Activated CD4-positive, alpha-beta T cell treated with anti-CD3 and anti-CD28 coated beads, Interleukin-2, amount 10 ng/mL, durations not matched to agents 24 days and 14 days (primary cell): ENCODE measurements at regions of chr10 and their contacts with region 1.

Region 1: GRCh38 chr10:50540069-50540825 is 83.5 kb downstream of the SGMS1 start:
- DNase-seq: peak; percentile 71
- H3K4me3 Mint-ChIP-seq: peak overlapping the region; percentile 63
- H3K27ac Mint-ChIP-seq: peak overlapping the region; percentile 87
- H3K4me1 Mint-ChIP-seq: peaks cover 72% of the 10 kb centered on the region
- H3K27me3 Mint-ChIP-seq: no peaks in the 10 kb centered on the region

Region 2: GRCh38 chr10:49187950-49188761 is 1352.1 kb before region 1 on chr10 and contains the start of gene TMEM273:
- intact Hi-C with region 1: loop called (anchors 10 kb)
- DNase-seq: peak; percentile 77
- H3K4me3 Mint-ChIP-seq: peak within 1 kb of the TSS; percentile 83
- H3K27ac Mint-ChIP-seq: peak within 1 kb of the TSS; percentile 77
- H3K4me1 Mint-ChIP-seq: peaks cover 50% of the 10 kb centered on the region
- H3K27me3 Mint-ChIP-seq: peaks cover 6% of the 10 kb centered on the region
- total RNA-seq, gene TMEM273: 34.3 and 36.4 TPM in 2 replicates

Region 3: DNA sequence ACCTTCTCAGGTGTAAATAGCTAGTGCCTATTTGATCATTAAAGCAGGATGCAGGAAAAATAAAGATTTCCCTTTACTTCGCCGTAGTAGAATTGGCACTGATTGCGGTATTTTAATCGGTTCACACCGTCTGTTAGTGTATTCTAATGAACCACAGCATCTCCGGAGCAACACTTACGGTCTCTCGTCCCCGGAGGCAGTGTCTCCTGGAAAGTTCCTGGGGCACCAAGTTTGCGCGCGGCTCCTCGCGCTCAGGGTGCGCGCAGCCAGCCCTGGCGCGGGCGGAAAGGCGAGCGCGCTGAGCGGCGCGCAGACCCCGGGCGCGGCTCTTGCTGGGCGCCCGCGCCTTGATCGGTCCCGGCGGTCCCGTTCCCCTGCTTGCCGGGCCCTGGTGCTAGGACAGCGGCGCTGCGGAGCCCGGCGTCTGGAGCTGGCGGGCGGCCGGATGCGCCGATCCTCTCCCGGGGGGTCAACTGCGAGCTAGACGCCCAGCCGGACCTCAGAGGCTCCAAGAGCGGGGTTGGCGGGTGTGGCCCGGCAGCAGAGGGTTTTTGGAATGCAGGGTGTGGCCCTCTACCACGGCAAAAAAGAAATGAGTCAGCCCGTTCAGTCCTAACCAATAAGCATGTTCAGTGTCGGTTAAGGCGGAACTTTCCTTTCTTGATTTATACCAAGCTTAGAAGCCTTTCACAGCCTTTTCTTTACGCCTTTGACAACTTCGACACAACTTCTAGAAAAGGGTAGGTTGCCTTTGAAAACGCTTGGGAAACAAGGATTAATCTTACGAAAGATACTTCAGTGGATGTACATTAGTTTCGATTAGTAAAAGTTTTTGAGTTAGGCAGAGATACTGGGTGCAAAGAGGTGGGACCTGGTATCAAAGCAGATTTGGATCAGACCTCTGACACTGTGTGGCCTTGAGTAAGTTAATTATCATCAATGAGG is 122.1 kb before region 1 on chr10:
- intact Hi-C with region 1: loop called (anchors 1 kb)
- DNase-seq: peak; percentile 88
- H3K4me3 Mint-ChIP-seq: peak overlapping the region; percentile 86
- H3K27ac Mint-ChIP-seq: peak overlapping the region; percentile 82
- H3K4me1 Mint-ChIP-seq: peaks cover 45% of the 10 kb centered on the region
- H3K27me3 Mint-ChIP-seq: no peaks in the 10 kb centered on the region

Region 4: GRCh38 chr10:50501918-50502452 is 38.3 kb before region 1 on chr10:
- intact Hi-C with region 1: loop called (anchors 1 kb)
- DNase-seq: no peak
- H3K4me3 Mint-ChIP-seq: peak overlapping the region; percentile 35
- H3K27ac Mint-ChIP-seq: peak overlapping the region; percentile 80
- H3K4me1 Mint-ChIP-seq: peaks cover 51% of the 10 kb centered on the region
- H3K27me3 Mint-ChIP-seq: no peaks in the 10 kb centered on the region

Region 5: DNA sequence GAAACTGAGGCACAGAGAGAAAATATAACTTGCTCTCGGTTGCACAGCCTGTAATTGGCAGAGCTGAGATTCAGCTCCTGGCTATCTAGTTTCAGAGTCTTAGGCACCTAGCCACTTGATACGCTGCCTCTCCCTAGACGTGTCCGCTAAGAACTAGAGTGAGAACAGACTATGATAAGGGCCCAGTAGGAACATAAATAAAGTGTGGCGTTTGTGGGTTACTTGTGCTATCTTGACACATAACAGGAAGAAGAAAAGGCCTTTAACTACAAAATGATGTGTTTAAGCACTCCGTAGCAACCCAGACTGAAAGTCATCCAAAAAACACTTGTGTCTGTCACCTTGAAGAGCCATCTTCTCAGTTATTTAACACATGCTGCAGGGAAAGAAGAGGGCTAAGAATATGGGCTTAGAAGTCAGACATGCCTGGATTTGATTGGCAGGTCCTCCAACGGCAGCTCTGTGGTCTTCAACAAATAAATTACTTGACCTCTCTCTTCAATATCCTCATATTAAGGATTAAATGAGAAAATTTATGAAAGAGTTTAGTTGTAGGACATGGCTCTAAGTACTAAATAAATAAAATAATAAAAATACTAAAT is 12.7 kb before region 1 on chr10:
- intact Hi-C with region 1: loop called (anchors 1 kb)
- DNase-seq: no peak
- H3K4me3 Mint-ChIP-seq: no peak overlapping the region
- H3K27ac Mint-ChIP-seq: no peak overlapping the region
- H3K4me1 Mint-ChIP-seq: peaks cover 10% of the 10 kb centered on the region
- H3K27me3 Mint-ChIP-seq: no peaks in the 10 kb centered on the region

Region 6: DNA sequence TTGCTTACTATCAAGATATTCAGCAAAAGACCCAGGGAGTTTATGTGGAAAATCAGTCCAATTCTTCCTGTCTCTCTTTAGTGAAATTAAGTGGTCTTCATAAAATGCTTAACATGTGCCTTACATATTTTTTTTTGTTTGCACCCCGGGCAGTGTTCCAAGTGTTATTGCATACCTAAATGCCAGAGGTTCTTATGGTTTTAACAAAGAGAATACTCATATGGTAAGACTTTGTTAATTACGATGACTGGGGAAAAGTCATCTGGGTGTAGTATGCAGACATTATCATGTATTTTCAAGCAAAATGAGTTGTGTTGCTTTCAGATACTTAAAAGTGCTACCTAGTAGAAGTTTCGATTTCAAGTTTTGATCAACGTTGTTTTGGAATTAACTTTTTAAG is 616.7 kb after region 1 on chr10:
- intact Hi-C with region 1: no loop called
- DNase-seq: no peak
- H3K4me3 Mint-ChIP-seq: no peak overlapping the region
- H3K27ac Mint-ChIP-seq: no peak overlapping the region
- H3K4me1 Mint-ChIP-seq: no peaks in the 10 kb centered on the region
- H3K27me3 Mint-ChIP-seq: no peaks in the 10 kb centered on the region